ENCODE measurements at regions of chr13 and their contacts with region 1.

Region 1: GRCh38 chr13:20182231-20182846 is 10.4 kb downstream of the GJB2 start:
- DNase-seq: peak; percentile 72
- H3K4me3 ChIP-seq: no peak overlapping the region
- CTCF ChIP-seq: peak; percentile 92

Region 2: GRCh38 chr13:20019043-20019442 is 163.3 kb before region 1 on chr13:
- in situ Hi-C with region 1: no loop called
- DNase-seq: no peak
- H3K4me3 ChIP-seq: no peak overlapping the region
- CTCF ChIP-seq: no peak

Region 3: GRCh38 chr13:20232556-20233277 is 50.4 kb after region 1 on chr13:
- in situ Hi-C with region 1: no loop called
- DNase-seq: no peak
- H3K4me3 ChIP-seq: peak overlapping the region; percentile 12
- CTCF ChIP-seq: no peak

Region 4: GRCh38 chr13:20703780-20704445 is 521.6 kb after region 1 on chr13:
- in situ Hi-C with region 1: loop called (anchors 25 kb)
- DNase-seq: peak; percentile 39
- H3K4me3 ChIP-seq: peak overlapping the region; percentile 34
- CTCF ChIP-seq: peak; percentile 39

Region 5: DNA sequence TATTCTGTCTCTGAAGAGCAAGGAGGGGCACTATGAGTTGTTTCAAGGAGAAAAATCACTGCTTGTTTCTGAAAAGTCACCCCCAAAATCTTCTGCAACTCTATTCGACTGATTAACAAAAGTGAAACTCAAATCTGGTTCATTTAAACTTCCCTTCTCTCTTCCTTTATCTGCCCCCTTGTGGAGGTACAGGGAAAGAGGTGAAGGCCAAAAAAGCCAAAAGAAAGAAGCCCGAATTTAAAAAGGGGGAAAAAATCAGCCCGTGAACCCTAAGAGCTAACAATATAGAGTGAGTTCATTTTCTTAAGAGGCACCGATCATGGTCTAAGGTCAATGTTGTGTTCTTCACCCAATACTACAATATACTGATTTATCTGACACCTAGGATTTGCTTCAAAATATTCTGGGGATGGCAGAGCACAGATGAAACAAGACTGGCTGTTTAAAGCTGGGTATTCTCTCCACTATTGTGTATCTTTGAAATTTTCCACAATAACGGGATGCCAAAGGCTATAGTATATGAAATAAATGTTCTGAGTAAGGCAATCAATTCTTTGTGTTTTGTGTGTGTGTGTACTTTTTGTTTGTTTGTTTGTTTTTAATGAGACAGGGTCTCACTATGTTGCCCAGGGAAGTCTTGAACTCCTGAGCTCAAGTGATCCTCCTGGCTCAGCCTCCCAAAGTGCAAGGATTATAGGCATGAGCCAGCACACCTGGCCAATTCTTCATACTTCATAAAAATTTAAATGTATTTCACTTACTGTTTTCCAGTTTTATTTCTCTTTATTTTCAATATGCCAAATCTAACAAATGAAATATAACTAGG is 646.4 kb after region 1 on chr13:
- in situ Hi-C with region 1: loop called (anchors 25 kb)
- DNase-seq: peak; percentile 47
- H3K4me3 ChIP-seq: no peak overlapping the region
- CTCF ChIP-seq: peak; percentile 85

Measured in astrocyte of the cerebellum (primary cell).